Head of caudate nucleus (tissue), 42 donors: ENCODE measurements at regions of chr11 and their contacts with region 1.

Region 1: DNA sequence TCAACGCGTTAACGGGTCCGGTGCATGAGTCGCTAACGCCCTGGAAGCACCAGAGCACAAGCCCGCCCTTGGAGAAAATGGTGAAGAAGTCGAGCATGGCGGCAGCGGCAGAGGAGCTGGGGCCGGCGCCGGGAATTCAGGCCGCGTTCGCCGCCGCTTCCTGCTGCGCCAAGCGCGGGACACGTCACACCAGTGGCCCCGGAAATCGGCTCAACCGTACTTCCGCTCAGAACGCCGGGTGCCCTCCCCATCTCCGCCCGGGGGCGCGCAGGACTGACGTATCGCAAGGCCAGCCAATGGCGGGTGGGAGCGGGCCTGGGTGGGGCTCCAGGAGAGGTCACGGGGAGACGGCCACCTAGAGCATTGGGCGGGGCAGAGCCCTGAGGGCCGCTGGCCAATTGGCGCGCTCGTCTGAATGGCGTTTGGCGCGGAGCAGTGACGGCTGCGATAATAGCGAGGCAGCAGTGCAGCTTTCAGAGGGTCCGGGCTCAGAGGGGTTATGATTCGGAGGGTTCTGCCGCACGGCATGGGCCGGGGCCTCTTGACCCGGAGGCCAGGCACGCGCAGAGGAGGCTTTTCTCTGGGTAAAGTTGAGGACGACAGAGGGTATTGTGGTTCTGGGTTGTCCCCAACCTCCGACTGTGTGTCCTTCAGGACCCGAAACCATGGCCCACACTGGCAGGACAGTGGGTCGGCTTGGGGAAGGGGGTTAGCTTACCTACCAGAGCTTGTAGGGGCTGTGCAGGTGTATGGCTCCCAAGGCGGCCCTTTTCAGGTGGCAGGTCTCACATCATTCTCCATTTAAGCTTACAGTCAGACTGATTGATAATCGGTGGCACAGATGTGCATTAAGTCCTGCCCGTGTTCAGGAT is at the starts of genes FOXRED1 and SRPRA:
- DNase-seq: peak; percentile 98 to 100 (median 100)

Region 2: GRCh38 chr11:126062679-126063506 is 206.1 kb before region 1 on chr11 and contains the start of gene CDON:
- intact Hi-C with region 1: loop called (anchors 5 kb)
- DNase-seq: peak; percentile 60 to 95 (median 88)

Region 3: GRCh38 chr11:126211235-126212088 is 57.5 kb before region 1 on chr11 and contains the starts of genes FAM118B and RPUSD4:
- intact Hi-C with region 1: loop called (anchors 5 kb)
- DNase-seq: peak; percentile 97 to 100 (median 99)

Region 4: DNA sequence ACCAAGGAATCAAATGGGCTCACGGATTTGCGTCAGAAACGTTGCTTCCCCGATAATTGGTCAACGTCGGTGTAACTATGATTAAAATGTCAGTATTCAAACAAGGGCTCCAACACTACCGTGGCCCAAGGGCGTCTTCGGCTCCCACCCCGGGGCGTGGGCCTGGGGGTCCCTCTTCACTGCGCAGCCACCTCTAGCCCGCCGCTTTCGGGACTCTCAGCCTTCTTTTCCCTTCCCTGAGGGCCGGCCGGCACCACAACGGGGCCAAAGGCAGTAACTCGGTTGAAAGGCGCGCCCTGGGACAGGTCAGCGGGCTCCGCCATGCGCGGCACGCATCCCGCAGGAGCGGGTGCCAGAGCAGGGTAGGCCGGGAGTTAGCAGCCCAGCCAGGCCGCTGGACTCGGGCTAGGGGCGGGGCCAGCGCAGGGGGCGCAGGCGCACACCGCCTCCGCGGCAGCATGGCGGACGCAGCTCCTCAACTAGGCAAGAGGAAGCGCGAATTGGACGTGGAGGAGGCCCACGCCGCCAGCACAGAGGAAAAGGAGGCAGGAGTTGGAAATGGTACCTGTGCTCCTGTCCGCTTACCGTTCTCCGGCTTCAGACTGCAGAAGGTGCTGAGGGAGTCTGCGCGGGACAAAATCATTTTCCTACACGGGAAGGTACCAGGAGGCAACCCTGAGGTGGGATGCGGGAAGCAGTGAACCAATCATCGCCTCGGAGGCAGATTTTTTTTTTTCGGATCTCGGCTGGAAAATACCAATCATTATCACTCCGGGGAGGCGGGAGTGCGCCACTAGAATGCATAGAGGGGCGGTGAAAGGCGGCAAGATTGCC is 34.9 kb after region 1 on chr11 and contains the start of gene DCPS:
- intact Hi-C with region 1: loop called (anchors 5 kb)
- DNase-seq: peak; percentile 80 to 97 (median 92)